ENCODE measurements at regions of chr13 and their contacts with region 1.

Region 1: GRCh38 chr13:75537401-75538365 is at the start of gene COMMD6:
- DNase-seq: peak; percentile 82 to 89 (median 87)
- ATAC-seq: peak; percentile 94 to 97 (median 96)
- H3K4me3 ChIP-seq: peak within 1 kb of the TSS; percentile 56 to 96 (median 85)
- H3K27ac ChIP-seq: peak within 1 kb of the TSS; percentile 11 to 92 (median 79)
- H3K4me1 ChIP-seq: peaks cover 0 to 30% (median 10%) of the 10 kb centered on the region in 12 donors
- H3K27me3 ChIP-seq: no peaks in the 10 kb centered on the region
- CTCF ChIP-seq: peak; percentile 29 to 82 (median 57)
- POLR2A ChIP-seq: peak in 1 of 2 donors; percentile 53
- total RNA-seq, gene COMMD6: 19.8 to 155 (median 126) TPM

Region 2: DNA sequence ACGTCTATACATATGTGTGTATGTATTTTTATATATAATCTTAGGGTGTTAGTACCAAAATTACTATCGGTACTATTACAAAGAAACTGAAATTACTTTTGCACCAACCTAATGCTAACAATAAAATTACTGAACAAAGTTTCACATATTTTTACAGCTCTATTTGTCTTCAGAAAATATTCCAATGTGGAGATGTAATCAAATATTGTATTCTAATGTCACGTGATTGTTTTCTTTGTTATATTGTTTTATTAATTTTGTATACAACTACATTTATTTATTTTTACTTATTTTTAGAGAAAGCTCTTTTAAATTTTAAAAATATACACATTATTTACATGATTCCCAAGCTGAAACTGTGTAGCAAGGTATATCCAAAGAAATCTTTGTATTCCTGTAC is 1176.4 kb before region 1 on chr13:
- intact Hi-C with region 1: no loop called
- DNase-seq: no peak
- ATAC-seq: no peak
- H3K4me3 ChIP-seq: no peak overlapping the region
- H3K27ac ChIP-seq: no peak overlapping the region
- H3K4me1 ChIP-seq: no peaks in the 10 kb centered on the region
- H3K27me3 ChIP-seq: no peaks in the 10 kb centered on the region
- CTCF ChIP-seq: no peak
- POLR2A ChIP-seq: no peak

Region 3: GRCh38 chr13:75365724-75366173 is 171.9 kb before region 1 on chr13:
- intact Hi-C with region 1: loop called in 4 of 10 experiments (anchors 5 to 10 kb)
- DNase-seq: no peak
- ATAC-seq: peak; percentile 37 to 76 (median 66)
- H3K4me3 ChIP-seq: peak overlapping the region in 9 of 12 donors; percentile 4 to 35 (median 21)
- H3K27ac ChIP-seq: peak overlapping the region; percentile 11 to 86 (median 72)
- H3K4me1 ChIP-seq: peaks cover 0 to 68% (median 34%) of the 10 kb centered on the region in 12 donors
- H3K27me3 ChIP-seq: no peaks in the 10 kb centered on the region
- CTCF ChIP-seq: peak in 1 of 12 donors; percentile 11
- POLR2A ChIP-seq: peak in 1 of 2 donors; percentile 15

Region 4: GRCh38 chr13:75372517-75372916 is 165.2 kb before region 1 on chr13:
- intact Hi-C with region 1: loop called in 4 of 10 experiments (anchors 5 to 10 kb)
- DNase-seq: peak in 1 of 5 donors; percentile 25
- ATAC-seq: peak in 2 of 4 donors; percentile 38 to 47
- H3K4me3 ChIP-seq: peak overlapping the region in 1 of 12 donors; percentile 9
- H3K27ac ChIP-seq: peak overlapping the region; percentile 2 to 71 (median 58)
- H3K4me1 ChIP-seq: peaks cover 4 to 51% (median 25%) of the 10 kb centered on the region in 12 donors
- H3K27me3 ChIP-seq: no peaks in the 10 kb centered on the region
- CTCF ChIP-seq: peak; percentile 64 to 87 (median 76)
- POLR2A ChIP-seq: no peak

Region 5: DNA sequence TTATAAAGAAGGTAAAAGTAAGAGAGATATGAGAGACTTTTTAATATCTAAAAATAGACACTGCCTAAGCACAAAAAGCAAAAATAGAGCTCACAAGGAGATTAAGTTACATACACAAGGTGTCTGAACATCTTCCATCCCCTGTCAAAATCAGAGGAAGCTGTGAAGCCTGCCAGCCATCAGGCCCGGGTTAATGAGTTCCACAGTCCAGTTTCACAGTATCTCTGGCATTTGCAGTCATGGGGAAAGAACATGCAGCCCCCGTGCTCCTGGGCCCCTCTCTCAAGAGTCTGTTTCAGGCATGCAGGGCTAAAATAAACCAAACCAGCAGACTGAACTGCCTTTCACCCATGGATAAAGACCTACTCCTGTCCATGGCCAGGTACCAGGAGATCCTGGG is 134.9 kb before region 1 on chr13:
- intact Hi-C with region 1: no loop called
- DNase-seq: peak; percentile 63 to 83 (median 72)
- ATAC-seq: peak; percentile 86 to 93 (median 88)
- H3K4me3 ChIP-seq: peak overlapping the region in 6 of 12 donors; percentile 1 to 18 (median 12)
- H3K27ac ChIP-seq: peak overlapping the region; percentile 11 to 89 (median 54)
- H3K4me1 ChIP-seq: peaks cover 0 to 55% (median 24%) of the 10 kb centered on the region in 12 donors
- H3K27me3 ChIP-seq: no peaks in the 10 kb centered on the region
- CTCF ChIP-seq: no peak
- POLR2A ChIP-seq: no peak

Region 6: GRCh38 chr13:75489502-75490263 is 48.0 kb before region 1 on chr13:
- intact Hi-C with region 1: loop called in 7 of 10 experiments (anchors 5 to 10 kb)
- DNase-seq: no peak
- ATAC-seq: no peak
- H3K4me3 ChIP-seq: no peak overlapping the region
- H3K27ac ChIP-seq: no peak overlapping the region
- H3K4me1 ChIP-seq: peaks cover 0 to 5% (median 0%) of the 10 kb centered on the region in 12 donors
- H3K27me3 ChIP-seq: no peaks in the 10 kb centered on the region
- CTCF ChIP-seq: no peak
- POLR2A ChIP-seq: no peak

Region 7: GRCh38 chr13:75549262-75550158 is 11.8 kb after region 1 on chr13 and contains the start of gene UCHL3:
- intact Hi-C with region 1: loop called in 1 of 10 experiments (anchors 1 kb)
- DNase-seq: peak; percentile 95 to 99 (median 97)
- ATAC-seq: peak; percentile 96 to 99 (median 98)
- H3K4me3 ChIP-seq: peak within 1 kb of the TSS; percentile 61 to 99 (median 87)
- H3K27ac ChIP-seq: peak within 1 kb of the TSS; percentile 64 to 95 (median 84)
- H3K4me1 ChIP-seq: peaks cover 0 to 16% (median 10%) of the 10 kb centered on the region in 12 donors
- H3K27me3 ChIP-seq: no peaks in the 10 kb centered on the region
- CTCF ChIP-seq: peak; percentile 74 to 99 (median 87)
- POLR2A ChIP-seq: peak in 1 of 2 donors; percentile 68
- total RNA-seq, gene UCHL3: 16.3 to 52.8 (median 27.6) TPM